ENCODE measurements at regions of chr9 and their contacts with region 1.

Region 1: GRCh38 chr9:70924895-70925547 is 196.4 kb downstream of the TRPM3 start:
- DNase-seq: peak; percentile 47
- H3K4me3 ChIP-seq: no peak overlapping the region
- H3K27ac ChIP-seq: no peak overlapping the region
- H3K4me1 ChIP-seq: no peaks in the 10 kb centered on the region
- CTCF ChIP-seq: peak; percentile 85

Region 2: DNA sequence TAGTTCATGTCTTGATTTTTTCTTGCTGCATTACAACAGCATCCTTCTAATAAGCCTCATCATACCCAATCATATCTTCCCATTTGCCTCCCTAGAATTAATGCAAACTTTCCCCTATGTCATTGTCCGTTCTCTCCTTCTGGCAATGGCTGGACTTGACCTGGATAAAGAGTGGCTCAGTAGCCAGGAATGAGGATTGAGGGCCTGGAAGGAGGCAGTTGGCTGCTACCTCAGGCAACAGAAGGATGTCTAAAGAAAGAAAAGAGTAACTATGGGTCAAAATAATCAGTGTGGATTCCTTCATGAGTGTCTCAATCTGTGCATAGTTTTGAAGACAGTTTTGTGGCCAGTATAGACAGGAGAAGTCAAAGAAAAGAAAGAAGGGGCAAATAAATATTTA is 13.2 kb before region 1 on chr9:
- CTCF ChIA-PET with region 1: no interaction called
- POLR2A ChIA-PET with region 1: no interaction called
- intact Hi-C with region 1: no loop called
- DNase-seq: no peak
- H3K4me3 ChIP-seq: no peak overlapping the region
- H3K27ac ChIP-seq: no peak overlapping the region
- H3K4me1 ChIP-seq: no peaks in the 10 kb centered on the region
- CTCF ChIP-seq: no peak

Region 3: GRCh38 chr9:70979966-70980365 is 54.9 kb after region 1 on chr9:
- CTCF ChIA-PET with region 1: no interaction called
- POLR2A ChIA-PET with region 1: no interaction called
- intact Hi-C with region 1: loop called (anchors 10 kb)
- DNase-seq: no peak
- H3K4me3 ChIP-seq: no peak overlapping the region
- H3K27ac ChIP-seq: no peak overlapping the region
- H3K4me1 ChIP-seq: no peaks in the 10 kb centered on the region
- CTCF ChIP-seq: no peak

Region 4: GRCh38 chr9:71001780-71002386 is 76.9 kb after region 1 on chr9:
- CTCF ChIA-PET with region 1: no interaction called
- POLR2A ChIA-PET with region 1: no interaction called
- intact Hi-C with region 1: loop called (anchors 2 kb)
- DNase-seq: peak; percentile 35
- H3K4me3 ChIP-seq: no peak overlapping the region
- H3K27ac ChIP-seq: no peak overlapping the region
- H3K4me1 ChIP-seq: no peaks in the 10 kb centered on the region
- CTCF ChIP-seq: peak; percentile 79

Region 5: GRCh38 chr9:71249729-71250317 is 324.8 kb after region 1 on chr9:
- CTCF ChIA-PET with region 1: no interaction called
- POLR2A ChIA-PET with region 1: no interaction called
- intact Hi-C with region 1: loop called (anchors 10 kb)
- DNase-seq: peak; percentile 48
- H3K4me3 ChIP-seq: no peak overlapping the region
- H3K27ac ChIP-seq: no peak overlapping the region
- H3K4me1 ChIP-seq: no peaks in the 10 kb centered on the region
- CTCF ChIP-seq: peak; percentile 87